Caco-2 (cell line): ENCODE measurements at regions of chr12 and their contacts with region 1.

Region 1: GRCh38 chr12:109385339-109386067 is 37.8 kb downstream of the MYO1H start:
- DNase-seq: peak in 1 of 2 experiments; percentile 47
- H3K4me3 ChIP-seq: no peak overlapping the region
- H3K4me3 Mint-ChIP-seq: no peak overlapping the region
- H3K27ac Mint-ChIP-seq: no peak overlapping the region
- H3K4me1 ChIP-seq: 0 out of 2 replicates have a peak, but pooled peaks cover 5% of the 10 kb centered on the region
- H3K4me1 Mint-ChIP-seq: no peaks in the 10 kb centered on the region
- H3K27me3 ChIP-seq: 0 out of 2 replicates have a peak, but pooled peaks cover 1% of the 10 kb centered on the region
- H3K27me3 Mint-ChIP-seq: peaks cover 11% of the 10 kb centered on the region
- CTCF ChIP-seq: peak; percentile 49 to 62

Region 2: GRCh38 chr12:109193896-109194295 is 191.6 kb before region 1 on chr12:
- CTCF ChIA-PET with region 1: no interaction called
- POLR2A ChIA-PET with region 1: no interaction called
- intact Hi-C with region 1: no loop called
- DNase-seq: no peak
- H3K4me3 ChIP-seq: no peak overlapping the region
- H3K4me3 Mint-ChIP-seq: no peak overlapping the region
- H3K27ac Mint-ChIP-seq: no peak overlapping the region
- H3K4me1 ChIP-seq: peaks cover 11% of the 10 kb centered on the region
- H3K4me1 Mint-ChIP-seq: no peaks in the 10 kb centered on the region
- H3K27me3 ChIP-seq: no peaks in the 10 kb centered on the region
- H3K27me3 Mint-ChIP-seq: no peaks in the 10 kb centered on the region
- CTCF ChIP-seq: no peak

Region 3: GRCh38 chr12:109264095-109264942 is 121.2 kb before region 1 on chr12:
- CTCF ChIA-PET with region 1: interaction called, 52 read pairs
- POLR2A ChIA-PET with region 1: no interaction called
- intact Hi-C with region 1: loop called (anchors 1 kb)
- DNase-seq: peak; percentile 84 to 90
- H3K4me3 ChIP-seq: no peak overlapping the region
- H3K4me3 Mint-ChIP-seq: no peak overlapping the region
- H3K27ac Mint-ChIP-seq: no peak overlapping the region
- H3K4me1 ChIP-seq: no peaks in the 10 kb centered on the region
- H3K4me1 Mint-ChIP-seq: no peaks in the 10 kb centered on the region
- H3K27me3 ChIP-seq: no peaks in the 10 kb centered on the region
- H3K27me3 Mint-ChIP-seq: no peaks in the 10 kb centered on the region
- CTCF ChIP-seq: peak; percentile 88 to 95

Region 4: DNA sequence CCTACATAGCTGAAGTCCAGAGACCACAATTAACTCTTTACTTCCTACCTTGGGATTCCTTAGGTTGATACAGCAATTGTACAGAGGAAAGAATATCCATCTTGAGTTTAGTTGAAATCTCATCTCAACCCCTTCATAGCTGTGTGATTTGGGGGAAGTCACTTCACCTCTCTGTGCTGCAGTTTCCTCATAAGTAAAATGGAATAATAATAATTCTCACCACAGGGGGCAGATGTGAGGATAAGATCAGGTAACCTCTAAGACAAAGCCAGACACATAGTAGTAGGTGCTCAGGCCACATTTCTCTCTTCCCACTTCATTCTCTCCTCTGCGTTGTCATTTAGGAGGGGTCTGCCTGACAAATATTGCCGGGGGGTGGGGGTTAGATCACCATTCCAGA is 83.1 kb before region 1 on chr12:
- CTCF ChIA-PET with region 1: interaction called, 5 read pairs
- POLR2A ChIA-PET with region 1: no interaction called
- intact Hi-C with region 1: loop called (anchors 5 kb)
- DNase-seq: peak in 1 of 2 experiments; percentile 49
- H3K4me3 ChIP-seq: no peak overlapping the region
- H3K4me3 Mint-ChIP-seq: no peak overlapping the region
- H3K27ac Mint-ChIP-seq: no peak overlapping the region
- H3K4me1 ChIP-seq: no peaks in the 10 kb centered on the region
- H3K4me1 Mint-ChIP-seq: peaks cover 11% of the 10 kb centered on the region
- H3K27me3 ChIP-seq: no peaks in the 10 kb centered on the region
- H3K27me3 Mint-ChIP-seq: peaks cover 3% of the 10 kb centered on the region
- CTCF ChIP-seq: peak; percentile 18 to 20

Region 5: DNA sequence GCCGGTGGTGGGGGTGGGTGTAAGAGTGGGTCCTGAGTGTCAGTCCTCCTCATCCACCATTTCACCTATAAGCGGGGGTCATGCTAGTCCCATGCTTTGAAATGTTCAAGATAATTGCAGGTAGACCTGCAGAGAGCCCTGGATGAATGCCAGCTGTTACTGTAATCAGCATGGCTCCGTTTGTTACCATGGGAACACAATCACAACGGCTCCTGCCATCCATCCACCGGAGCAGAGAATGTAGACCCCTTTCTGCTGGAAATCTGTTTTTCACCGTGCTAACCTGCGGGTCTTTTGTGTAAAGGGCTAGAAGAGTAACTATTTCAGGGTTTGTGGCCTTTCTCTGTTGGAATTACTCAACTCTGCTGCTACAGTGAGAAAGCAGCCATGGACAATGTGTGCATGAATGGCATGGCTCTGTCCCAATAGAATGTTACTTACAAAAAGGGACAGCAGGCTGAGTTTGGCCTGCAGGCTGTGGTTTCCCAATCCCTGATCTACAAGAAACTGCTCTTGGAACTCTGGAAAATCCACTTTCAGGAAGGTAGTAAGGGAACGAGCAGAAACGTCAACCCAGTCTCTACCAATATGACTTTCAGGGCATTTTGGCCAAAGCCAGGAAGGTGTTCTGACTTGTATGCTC is 55.5 kb after region 1 on chr12:
- CTCF ChIA-PET with region 1: no interaction called
- POLR2A ChIA-PET with region 1: no interaction called
- intact Hi-C with region 1: no loop called
- DNase-seq: no peak
- H3K4me3 ChIP-seq: no peak overlapping the region
- H3K4me3 Mint-ChIP-seq: no peak overlapping the region
- H3K27ac Mint-ChIP-seq: no peak overlapping the region
- H3K4me1 ChIP-seq: no peaks in the 10 kb centered on the region
- H3K4me1 Mint-ChIP-seq: no peaks in the 10 kb centered on the region
- H3K27me3 ChIP-seq: no peaks in the 10 kb centered on the region
- H3K27me3 Mint-ChIP-seq: no peaks in the 10 kb centered on the region
- CTCF ChIP-seq: no peak